SK-MEL-5 (cell line): ENCODE measurements at regions of chr7 and their contacts with region 1.

Region 1: DNA sequence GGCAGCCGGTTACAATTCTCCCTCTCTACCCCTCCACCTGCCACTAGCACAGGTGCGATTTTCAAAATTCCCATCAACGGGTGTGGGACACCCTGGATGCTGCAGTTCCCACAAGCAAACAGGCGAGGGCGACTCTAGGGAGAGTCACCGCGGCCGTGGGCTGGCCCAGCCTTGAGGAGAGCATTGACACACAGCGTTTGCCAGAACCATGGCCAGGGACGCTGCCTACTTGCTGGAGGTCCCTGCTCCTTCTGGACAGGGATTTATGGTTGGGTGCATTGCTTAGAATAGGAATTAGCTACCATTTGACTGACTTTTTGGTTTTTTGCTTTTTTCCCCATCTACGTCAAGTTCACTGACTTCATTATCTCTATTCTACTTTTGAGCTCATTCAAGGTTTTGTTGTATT is 19.0 kb upstream of the CLDN4 start:
- DNase-seq: peak; percentile 85

Region 2: DNA sequence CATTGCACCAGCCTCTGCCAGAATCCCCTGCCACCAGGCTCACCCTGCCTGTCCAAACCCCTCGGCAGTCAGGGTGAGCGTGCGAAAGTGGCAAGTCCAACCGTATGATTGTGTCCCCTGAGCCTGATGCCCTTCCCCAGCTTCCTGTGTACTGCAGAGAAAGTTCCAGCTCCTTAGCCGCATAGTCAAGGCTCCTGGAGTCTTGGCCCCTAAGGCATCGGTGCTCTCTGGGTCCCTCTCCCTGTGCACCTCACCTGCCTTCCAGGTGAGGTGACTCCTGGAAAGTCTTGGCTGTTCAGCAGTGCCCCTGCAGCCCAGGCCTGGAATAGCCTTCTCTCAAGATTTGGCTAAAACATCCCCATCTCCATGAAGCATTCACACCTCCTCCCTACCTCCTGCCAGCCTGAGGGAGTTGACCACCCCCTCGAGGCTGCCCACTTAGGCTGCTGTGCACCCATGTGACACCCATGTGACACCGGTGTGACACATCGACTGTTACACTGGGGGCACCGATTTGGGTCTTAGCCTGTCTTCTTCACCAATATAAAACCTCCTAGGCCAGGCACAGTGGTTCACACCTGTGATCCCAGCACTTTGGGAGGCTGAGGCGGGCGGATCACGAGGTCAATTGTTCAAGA is 160.1 kb after region 1 on chr7:
- in situ Hi-C with region 1: loop called (anchors 25 kb)
- DNase-seq: peak; percentile 25